Heart left ventricle (tissue), 16 donors: ENCODE measurements at regions of chr11 and their contacts with region 1.

Region 1: DNA sequence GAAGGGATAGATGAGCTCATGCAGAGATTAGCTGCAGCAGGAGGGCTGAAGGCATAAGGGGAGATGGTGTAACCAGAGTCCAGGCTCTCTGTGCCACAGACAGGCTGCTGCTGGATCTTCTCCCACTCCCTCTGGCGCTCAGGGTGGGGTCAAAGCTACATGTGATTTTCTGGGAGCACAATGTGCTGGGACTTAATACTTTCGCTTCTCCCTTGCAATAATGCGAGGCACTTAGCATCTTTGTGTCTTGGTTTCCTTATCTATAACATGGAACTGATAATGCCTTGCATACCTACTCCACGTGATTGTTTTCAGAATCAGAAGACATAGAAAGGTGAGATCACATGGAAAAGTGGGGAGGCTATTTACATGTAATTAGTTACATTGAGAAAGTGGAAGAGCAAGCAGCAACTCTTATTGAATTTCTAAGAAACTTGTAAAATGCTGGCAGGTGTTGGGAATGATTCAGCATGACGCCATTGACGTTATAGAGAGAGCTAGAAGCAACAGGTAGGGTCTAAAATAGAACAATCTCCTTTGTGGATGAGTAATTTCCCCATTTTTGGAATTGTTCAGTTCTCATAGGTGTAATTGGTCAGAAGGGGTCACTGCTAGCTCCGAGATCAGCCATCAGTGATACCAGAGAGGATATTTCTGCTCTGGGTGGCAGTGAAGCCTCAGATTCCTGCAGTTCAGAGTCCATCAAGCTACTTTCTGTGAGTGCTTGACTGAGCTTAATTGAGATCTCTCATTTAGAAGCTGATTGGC is 8.2 kb upstream of the OR9I1 start:
- DNase-seq: no peak
- ATAC-seq: no peak
- H3K4me3 ChIP-seq: no peak overlapping the region
- H3K27ac ChIP-seq: no peak overlapping the region
- H3K4me1 ChIP-seq: no peaks in the 10 kb centered on the region
- H3K27me3 ChIP-seq: no peaks in the 10 kb centered on the region
- CTCF ChIP-seq: no peak
- POLR2A ChIP-seq: no peak

Region 2: DNA sequence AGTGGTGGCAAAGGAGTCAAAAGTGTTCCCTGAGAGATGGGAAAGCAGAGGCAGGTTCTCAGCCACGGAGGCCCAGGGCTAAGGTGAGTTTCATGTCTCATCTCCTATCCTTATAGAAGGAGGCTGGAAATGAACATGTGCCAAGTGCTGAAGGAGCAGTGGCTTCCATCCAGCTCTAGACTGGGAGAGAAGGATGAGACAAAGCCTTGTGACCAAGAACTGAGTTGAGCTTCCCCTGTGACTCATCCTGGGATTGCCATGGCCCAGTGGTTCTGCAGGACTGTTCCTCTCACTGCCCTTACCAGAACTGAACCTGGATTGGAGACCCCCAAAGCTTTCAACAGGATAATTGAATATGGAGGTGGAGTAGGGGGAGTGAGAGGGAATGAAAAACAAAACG is 126.6 kb before region 1 on chr11:
- intact Hi-C with region 1: no loop called
- DNase-seq: no peak
- ATAC-seq: no peak
- H3K4me3 ChIP-seq: no peak overlapping the region
- H3K27ac ChIP-seq: no peak overlapping the region
- H3K4me1 ChIP-seq: peaks cover 0 to 27% (median 5%) of the 10 kb centered on the region in 12 donors
- H3K27me3 ChIP-seq: no peaks in the 10 kb centered on the region
- CTCF ChIP-seq: no peak
- POLR2A ChIP-seq: no peak

Region 3: DNA sequence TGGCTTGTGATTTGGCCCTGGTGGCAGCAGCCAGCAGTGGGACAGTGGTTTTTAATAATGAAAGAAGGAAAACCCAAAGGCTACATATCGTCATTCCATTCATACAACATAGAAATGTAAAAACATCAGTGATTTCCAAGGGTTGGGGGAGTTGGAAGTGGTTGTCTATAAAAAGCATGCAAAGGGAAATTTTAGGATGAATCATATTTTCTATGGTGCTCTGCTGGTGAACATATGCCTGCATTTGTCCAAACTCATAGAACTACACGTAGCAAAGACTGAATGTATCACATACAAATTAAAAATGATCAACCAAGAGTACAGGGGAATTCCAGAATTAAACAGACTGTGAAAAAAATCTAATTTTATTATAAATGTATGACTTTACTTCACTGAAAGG is 262.1 kb after region 1 on chr11:
- intact Hi-C with region 1: loop called in 1 of 10 experiments (anchors 5 kb)
- DNase-seq: no peak
- ATAC-seq: no peak
- H3K4me3 ChIP-seq: no peak overlapping the region
- H3K27ac ChIP-seq: no peak overlapping the region
- H3K4me1 ChIP-seq: peaks cover 0 to 5% (median 0%) of the 10 kb centered on the region in 12 donors
- H3K27me3 ChIP-seq: no peaks in the 10 kb centered on the region
- CTCF ChIP-seq: no peak
- POLR2A ChIP-seq: no peak

Region 4: DNA sequence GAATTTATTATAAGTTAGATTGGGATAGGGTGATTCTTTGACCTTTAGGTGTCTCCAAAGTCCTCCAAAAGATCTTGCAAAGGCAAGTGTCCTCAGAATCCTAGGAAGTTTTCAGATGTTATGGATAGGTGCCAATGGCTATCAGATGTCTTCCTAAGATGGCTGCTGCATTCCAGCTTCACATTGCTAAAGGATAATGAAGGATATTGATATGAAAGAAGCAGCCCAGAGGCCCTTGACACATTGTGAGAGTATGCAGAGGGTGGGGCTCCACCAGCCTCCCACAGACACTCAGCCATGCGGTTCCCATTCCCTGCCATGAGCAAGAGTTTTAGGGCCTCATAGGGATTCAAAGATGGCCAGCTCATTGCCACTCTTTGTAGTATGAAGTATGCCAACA is 733.3 kb after region 1 on chr11:
- intact Hi-C with region 1: no loop called
- DNase-seq: no peak
- ATAC-seq: no peak
- H3K4me3 ChIP-seq: no peak overlapping the region
- H3K27ac ChIP-seq: no peak overlapping the region
- H3K4me1 ChIP-seq: no peaks in the 10 kb centered on the region
- H3K27me3 ChIP-seq: no peaks in the 10 kb centered on the region
- CTCF ChIP-seq: no peak
- POLR2A ChIP-seq: no peak